Heart left ventricle (tissue), 16 donors: ENCODE measurements at regions of chr7 and their contacts with region 1.

Region 1: GRCh38 chr7:117944886-117945285 is 71.6 kb upstream of the CTTNBP2 start:
- DNase-seq: no peak
- ATAC-seq: no peak
- H3K4me3 ChIP-seq: no peak overlapping the region
- H3K27ac ChIP-seq: no peak overlapping the region
- H3K4me1 ChIP-seq: no peaks in the 10 kb centered on the region
- H3K27me3 ChIP-seq: no peaks in the 10 kb centered on the region
- CTCF ChIP-seq: no peak
- POLR2A ChIP-seq: no peak

Region 2: DNA sequence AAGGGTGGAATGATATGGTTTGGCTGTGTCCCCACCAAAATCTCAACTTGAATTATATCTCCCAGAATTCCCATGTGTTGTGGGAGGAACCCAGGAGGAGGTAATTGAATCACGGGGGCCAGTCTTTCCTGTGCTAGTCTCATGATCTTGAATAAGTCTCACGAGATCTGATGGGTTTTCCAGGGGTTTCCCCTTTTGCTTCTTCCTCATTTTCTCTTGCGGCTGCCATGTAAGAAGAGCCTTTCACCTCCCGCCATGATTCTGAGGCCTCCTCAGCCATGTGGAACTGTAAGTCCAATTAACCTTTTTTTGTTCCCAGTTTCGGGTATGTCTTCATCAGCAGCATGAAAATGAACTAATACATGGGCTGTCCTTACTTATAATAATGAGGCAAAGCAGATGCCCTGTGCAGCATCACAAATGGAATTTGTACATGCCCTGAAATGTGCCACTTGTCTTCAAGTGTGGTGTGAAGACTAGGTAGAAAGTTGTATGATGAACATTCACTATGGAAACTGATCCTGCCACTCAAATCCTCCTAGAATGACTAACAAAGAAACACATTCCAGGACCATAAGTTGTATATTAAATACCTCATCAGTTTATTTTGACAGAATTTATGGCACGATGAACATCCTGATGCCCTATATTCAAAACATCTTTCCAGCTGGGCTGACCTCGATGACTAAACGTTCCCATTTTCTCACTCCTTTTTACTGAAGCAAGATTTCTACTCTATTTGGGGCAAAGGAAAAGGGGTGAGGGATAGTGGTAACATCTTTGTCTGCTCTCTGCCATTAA is 51.2 kb after region 1 on chr7:
- intact Hi-C with region 1: loop called in 1 of 10 experiments (anchors 2 kb)
- DNase-seq: no peak
- ATAC-seq: no peak
- H3K4me3 ChIP-seq: no peak overlapping the region
- H3K27ac ChIP-seq: no peak overlapping the region
- H3K4me1 ChIP-seq: no peaks in the 10 kb centered on the region
- H3K27me3 ChIP-seq: no peaks in the 10 kb centered on the region
- CTCF ChIP-seq: no peak
- POLR2A ChIP-seq: no peak